Activated T-helper 1 cell treated with anti-CD3 and anti-CD28 coated beads, Interleukin-12 subunit alpha, Interleukin-12 subunit beta, Interleukin-2, Interleukin-4 antibody, amounts not matched to agents 30 ng/mL and 10 ng/mL and 1 ng/mL, durations not matched to agents 14 hours and 24 hours and 36 hours (primary cell): ENCODE measurements at regions of chr5 and their contacts with region 1.

Region 1: DNA sequence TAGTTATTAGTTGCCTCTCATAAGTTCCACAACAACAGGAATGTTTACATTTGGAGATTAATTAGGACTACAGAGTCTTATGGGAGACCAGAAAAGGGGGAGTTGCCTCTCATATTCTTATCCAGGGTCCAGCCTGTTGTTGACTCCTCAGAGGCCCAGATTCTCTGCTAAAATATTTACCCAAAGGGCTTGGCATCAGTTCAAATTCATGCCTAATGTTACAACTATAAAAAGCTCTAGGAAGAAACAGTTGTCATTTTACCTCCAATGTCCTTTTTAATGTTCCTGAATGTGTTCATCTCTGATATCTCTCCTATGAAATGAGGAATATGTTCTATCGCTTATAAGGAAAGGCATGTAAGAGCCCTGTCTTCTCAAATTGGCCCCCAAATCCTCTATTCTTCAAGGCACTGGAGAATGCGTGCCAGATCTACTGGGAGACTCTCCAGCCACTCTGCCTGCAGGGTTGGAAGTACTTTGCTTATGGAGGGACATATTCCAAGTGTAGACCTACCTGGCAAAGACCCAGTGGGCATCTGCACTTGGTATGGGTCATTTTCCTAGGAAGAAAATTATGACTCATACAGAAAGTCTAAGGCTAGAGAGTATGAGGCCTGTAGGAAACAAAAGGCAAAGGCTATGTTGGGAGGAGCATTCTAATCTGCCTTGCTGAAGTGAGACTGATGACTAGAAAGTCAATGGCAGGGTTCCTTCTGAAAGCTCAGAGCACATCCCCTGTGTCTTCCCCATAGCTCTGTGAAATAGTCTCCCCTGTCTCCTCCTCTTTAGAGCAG is 192.6 kb downstream of the ESM1 start:
- DNase-seq: no peak
- H3K4me3 Mint-ChIP-seq: peak overlapping the region; percentile 32
- H3K27ac Mint-ChIP-seq: peak overlapping the region; percentile 91
- H3K4me1 Mint-ChIP-seq: peaks cover 47% of the 10 kb centered on the region
- H3K27me3 Mint-ChIP-seq: peaks cover 3% of the 10 kb centered on the region

Region 2: GRCh38 chr5:54109626-54110330 is 683.0 kb before region 1 on chr5:
- intact Hi-C with region 1: no loop called
- DNase-seq: no peak
- H3K4me3 Mint-ChIP-seq: no peak overlapping the region
- H3K27ac Mint-ChIP-seq: no peak overlapping the region
- H3K4me1 Mint-ChIP-seq: no peaks in the 10 kb centered on the region
- H3K27me3 Mint-ChIP-seq: peaks cover 1% of the 10 kb centered on the region

Region 3: GRCh38 chr5:54610197-54610944 is 182.4 kb before region 1 on chr5:
- intact Hi-C with region 1: loop called (anchors 1 kb)
- DNase-seq: peak; percentile 41
- H3K4me3 Mint-ChIP-seq: peak overlapping the region; percentile 68
- H3K27ac Mint-ChIP-seq: peak overlapping the region; percentile 92
- H3K4me1 Mint-ChIP-seq: peaks cover 27% of the 10 kb centered on the region
- H3K27me3 Mint-ChIP-seq: peaks cover 3% of the 10 kb centered on the region

Region 4: DNA sequence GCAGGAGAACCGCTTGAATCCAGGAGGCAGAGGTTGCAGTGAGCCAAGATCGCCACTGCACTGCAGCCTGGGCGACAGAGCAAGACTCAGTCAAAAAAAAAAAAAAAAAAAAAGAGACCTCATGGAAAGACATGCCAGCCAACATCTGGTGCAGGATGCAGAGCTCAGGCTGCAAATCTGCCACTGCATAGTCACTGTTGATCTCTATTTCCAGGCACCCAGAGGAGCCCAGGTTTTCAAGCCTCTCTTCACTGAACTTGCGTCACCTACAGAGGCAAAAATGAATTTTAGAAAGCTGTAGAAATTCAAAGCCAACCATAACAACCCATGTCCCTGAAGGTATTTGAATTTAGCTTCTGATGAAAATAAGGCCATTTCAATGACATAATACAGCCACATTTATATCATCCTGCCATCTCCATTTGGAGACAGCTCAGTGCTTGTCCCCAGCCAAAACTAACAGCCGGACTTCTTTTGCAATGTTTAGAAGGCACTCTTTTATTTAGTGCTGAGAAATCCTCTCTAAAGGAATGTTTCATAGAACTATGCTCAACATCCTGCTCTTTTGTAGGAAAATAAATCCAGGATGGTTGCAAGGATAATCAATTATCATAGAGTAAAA is 162.0 kb before region 1 on chr5:
- intact Hi-C with region 1: no loop called
- DNase-seq: no peak
- H3K4me3 Mint-ChIP-seq: no peak overlapping the region
- H3K27ac Mint-ChIP-seq: no peak overlapping the region
- H3K4me1 Mint-ChIP-seq: no peaks in the 10 kb centered on the region
- H3K27me3 Mint-ChIP-seq: peaks cover 4% of the 10 kb centered on the region

Region 5: GRCh38 chr5:54753034-54753433 is 39.8 kb before region 1 on chr5:
- intact Hi-C with region 1: loop called (anchors 2 kb)
- DNase-seq: peak; percentile 42
- H3K4me3 Mint-ChIP-seq: peak overlapping the region; percentile 47
- H3K27ac Mint-ChIP-seq: peak overlapping the region; percentile 80
- H3K4me1 Mint-ChIP-seq: peaks cover 55% of the 10 kb centered on the region
- H3K27me3 Mint-ChIP-seq: no peaks in the 10 kb centered on the region

Region 6: GRCh38 chr5:54825005-54825404 is 32.2 kb after region 1 on chr5:
- intact Hi-C with region 1: no loop called
- DNase-seq: no peak
- H3K4me3 Mint-ChIP-seq: no peak overlapping the region
- H3K27ac Mint-ChIP-seq: no peak overlapping the region
- H3K4me1 Mint-ChIP-seq: no peaks in the 10 kb centered on the region
- H3K27me3 Mint-ChIP-seq: peaks cover 31% of the 10 kb centered on the region